ENCODE measurements at regions of chr5 and their contacts with region 1.

Region 1: DNA sequence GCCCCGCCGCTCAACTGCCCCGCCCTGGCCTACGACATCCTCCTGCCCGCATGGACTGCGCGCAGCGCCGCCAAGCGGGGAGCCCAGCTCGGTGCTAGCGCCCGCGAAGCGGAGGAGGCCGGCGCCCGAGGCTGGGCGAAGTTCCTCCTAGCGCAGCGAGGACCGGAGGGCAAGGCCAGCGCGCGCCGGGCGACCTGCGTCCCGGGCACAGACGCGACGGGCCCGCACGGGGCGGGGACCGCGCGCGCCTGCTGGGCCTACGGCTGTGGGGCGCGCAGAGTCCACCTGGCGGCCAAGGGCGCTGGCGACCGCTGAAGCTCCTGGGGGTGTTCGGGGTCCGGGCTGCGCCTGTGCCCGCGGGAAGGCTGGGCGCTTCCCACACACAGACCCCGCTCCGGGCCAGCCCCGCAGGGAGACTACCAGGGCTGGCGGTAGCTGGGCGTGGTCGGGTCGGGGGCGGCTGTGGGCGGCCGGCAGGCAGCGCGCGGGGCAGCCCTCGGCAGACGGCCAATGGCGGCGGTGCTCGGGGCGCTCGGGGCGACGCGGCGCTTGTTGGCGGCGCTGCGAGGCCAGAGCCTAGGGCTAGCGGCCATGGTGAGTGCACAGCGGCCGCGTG is at the start of gene PCBD2:
- DNase-seq: peak; percentile 86 to 95
- H3K4me3 ChIP-seq: peak within 1 kb of the TSS; percentile 84 to 95 (median 93)
- H3K27ac ChIP-seq: peak within 1 kb of the TSS; percentile 91
- H3K4me1 ChIP-seq: peaks cover 0 to 4% (median 0%) of the 10 kb centered on the region in 4 experiments; a peak in 3 of 7 replicates
- H3K27me3 ChIP-seq: no peaks in the 10 kb centered on the region
- CTCF ChIP-seq: peak; percentile 89 to 92 (median 90)
- EP300 ChIP-seq: no peak; a peak in 1 of 3 replicates
- POLR2A ChIP-seq: peak; percentile 75 to 76
- RAD21 ChIP-seq: peak; percentile 65 to 78
- total RNA-seq, gene PCBD2: 7.2 and 10.3 TPM in 2 replicates

Region 2: GRCh38 chr5:134845852-134846640 is 58.7 kb before region 1 on chr5 and contains the start of gene C5orf24:
- CTCF ChIA-PET with region 1: interaction called, 4 read pairs
- POLR2A ChIA-PET with region 1: interaction called, 14 read pairs
- DNase-seq: peak; percentile 58 to 84
- H3K4me3 ChIP-seq: peak within 1 kb of the TSS; percentile 62 to 88 (median 72)
- H3K27ac ChIP-seq: peak within 1 kb of the TSS; percentile 66
- H3K4me1 ChIP-seq: no peaks in the 10 kb centered on the region
- H3K27me3 ChIP-seq: no peaks in the 10 kb centered on the region
- CTCF ChIP-seq: no peak
- EP300 ChIP-seq: peak in 1 of 2 experiments; percentile 15; a peak in 1 of 3 replicates
- POLR2A ChIP-seq: peak; percentile 82 to 86
- RAD21 ChIP-seq: no peak
- total RNA-seq, gene C5orf24: 19.6 and 20.2 TPM in 2 replicates

Region 3: DNA sequence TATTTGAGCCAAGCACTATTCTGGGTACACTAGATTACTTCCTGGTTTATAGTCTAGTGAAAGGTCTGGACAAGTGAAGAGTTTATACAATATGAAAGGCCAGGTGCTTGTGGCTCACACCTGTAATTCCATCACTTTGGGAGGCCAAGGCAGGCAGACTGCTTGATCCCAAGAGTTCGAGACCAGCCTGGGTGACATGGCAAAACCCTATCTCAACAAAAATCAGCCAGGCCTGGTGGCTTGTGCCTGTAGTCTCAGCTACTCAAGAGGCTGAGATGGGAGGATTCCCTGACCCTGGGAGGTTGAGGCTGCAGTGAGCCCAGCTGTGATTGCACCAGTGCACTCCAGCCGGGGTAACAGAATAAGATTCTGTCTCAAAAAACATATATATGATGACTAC is 40.0 kb before region 1 on chr5:
- CTCF ChIA-PET with region 1: interaction called, 14 read pairs
- POLR2A ChIA-PET with region 1: interaction called, 13 read pairs
- DNase-seq: no peak
- H3K4me3 ChIP-seq: no peak overlapping the region
- H3K27ac ChIP-seq: no peak overlapping the region
- H3K4me1 ChIP-seq: no peaks in the 10 kb centered on the region
- H3K27me3 ChIP-seq: no peaks in the 10 kb centered on the region
- CTCF ChIP-seq: no peak
- EP300 ChIP-seq: no peak
- POLR2A ChIP-seq: no peak
- RAD21 ChIP-seq: no peak

Region 4: DNA sequence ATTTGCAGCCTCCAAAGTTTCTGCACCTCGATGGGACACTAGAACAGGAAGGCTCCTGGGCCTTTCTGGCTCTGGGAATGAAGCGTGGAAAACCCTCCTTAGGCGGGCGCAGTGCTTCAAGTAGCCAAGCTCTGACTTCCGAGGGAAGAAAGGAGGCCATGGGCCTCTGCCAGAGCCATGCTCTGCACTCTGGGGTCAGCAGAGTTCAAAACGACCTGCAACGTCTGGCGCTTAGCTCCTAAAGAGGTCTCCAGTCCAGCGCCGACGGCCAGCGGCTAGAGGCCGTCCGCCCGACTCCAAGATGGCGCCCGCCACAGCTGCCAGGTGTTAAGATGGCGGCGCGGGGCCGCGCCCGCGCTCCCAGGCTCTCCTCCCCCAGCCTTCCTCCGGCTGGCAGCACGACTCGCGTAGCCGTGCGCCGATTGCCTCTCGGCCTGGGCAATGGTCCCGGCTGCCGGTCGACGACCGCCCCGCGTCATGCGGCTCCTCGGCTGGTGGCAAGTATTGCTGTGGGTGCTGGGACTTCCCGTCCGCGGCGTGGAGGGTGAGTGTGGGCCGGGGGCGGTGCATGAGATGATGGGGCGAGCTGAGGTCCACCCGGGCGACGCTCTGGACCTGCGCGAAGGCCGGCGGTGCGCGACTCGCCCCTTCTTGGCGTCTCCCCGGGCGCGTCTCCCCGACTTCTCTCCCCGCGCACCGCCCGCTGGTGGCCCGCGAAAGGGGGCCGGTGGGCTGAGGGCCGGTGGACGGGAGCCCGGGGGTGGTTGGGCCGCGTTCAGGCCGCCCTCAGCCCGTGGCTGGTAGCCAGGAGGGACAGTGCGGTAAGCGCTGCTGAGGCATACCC is 30.5 kb before region 1 on chr5 and contains the start of gene TXNDC15:
- CTCF ChIA-PET with region 1: interaction called, 5 read pairs
- POLR2A ChIA-PET with region 1: interaction called, 54 read pairs
- DNase-seq: peak; percentile 61 to 89
- H3K4me3 ChIP-seq: peak within 1 kb of the TSS; percentile 73 to 93 (median 78)
- H3K27ac ChIP-seq: peak within 1 kb of the TSS; percentile 79; the same call in 1 of the 2 replicates
- H3K4me1 ChIP-seq: peaks cover 0 to 12% (median 8%) of the 10 kb centered on the region in 4 experiments; a peak in 6 of 7 replicates
- H3K27me3 ChIP-seq: no peaks in the 10 kb centered on the region
- CTCF ChIP-seq: no peak
- EP300 ChIP-seq: no peak
- POLR2A ChIP-seq: peak in 1 of 2 experiments; percentile 91; a peak in 2 of 3 replicates
- RAD21 ChIP-seq: no peak
- total RNA-seq, gene TXNDC15: 30.8 and 34.5 TPM in 2 replicates

Region 5: GRCh38 chr5:134887593-134888159 is 17.1 kb before region 1 on chr5:
- CTCF ChIA-PET with region 1: interaction called, 18 read pairs
- POLR2A ChIA-PET with region 1: interaction called, 13 read pairs
- DNase-seq: no peak
- H3K4me3 ChIP-seq: no peak overlapping the region
- H3K27ac ChIP-seq: 0 out of 2 replicates have a peak overlapping the region, but pooled peaks have one; percentile 32
- H3K4me1 ChIP-seq: no peaks in the 10 kb centered on the region
- H3K27me3 ChIP-seq: no peaks in the 10 kb centered on the region
- CTCF ChIP-seq: peak in 1 of 3 experiments; percentile 29; a peak in 1 of 4 replicates
- EP300 ChIP-seq: no peak
- POLR2A ChIP-seq: no peak
- RAD21 ChIP-seq: no peak

Region 6: GRCh38 chr5:134917070-134917815 is 12.5 kb after region 1 on chr5:
- CTCF ChIA-PET with region 1: interaction called, 49 read pairs
- POLR2A ChIA-PET with region 1: interaction called, 15 read pairs
- DNase-seq: peak in 1 of 2 experiments; percentile 67
- H3K4me3 ChIP-seq: no peak overlapping the region
- H3K27ac ChIP-seq: no peak overlapping the region
- H3K4me1 ChIP-seq: no peaks in the 10 kb centered on the region; a peak in 1 of 7 replicates
- H3K27me3 ChIP-seq: no peaks in the 10 kb centered on the region
- CTCF ChIP-seq: peak; percentile 59 to 68 (median 63)
- EP300 ChIP-seq: no peak
- POLR2A ChIP-seq: no peak
- RAD21 ChIP-seq: peak; percentile 61 to 63

Region 7: GRCh38 chr5:135426102-135427082 is 521.7 kb after region 1 on chr5:
- CTCF ChIA-PET with region 1: no interaction called
- POLR2A ChIA-PET with region 1: no interaction called
- DNase-seq: no peak
- H3K4me3 ChIP-seq: no peak overlapping the region
- H3K27ac ChIP-seq: no peak overlapping the region
- H3K4me1 ChIP-seq: no peaks in the 10 kb centered on the region
- H3K27me3 ChIP-seq: no peaks in the 10 kb centered on the region
- CTCF ChIP-seq: peak in 2 of 3 experiments; percentile 58 to 78; a peak in 3 of 4 replicates
- EP300 ChIP-seq: no peak
- POLR2A ChIP-seq: no peak
- RAD21 ChIP-seq: peak; percentile 57 to 68

Measured in H1 (cell line).